ENCODE measurements at regions of chr16 and their contacts with region 1.

Region 1: DNA sequence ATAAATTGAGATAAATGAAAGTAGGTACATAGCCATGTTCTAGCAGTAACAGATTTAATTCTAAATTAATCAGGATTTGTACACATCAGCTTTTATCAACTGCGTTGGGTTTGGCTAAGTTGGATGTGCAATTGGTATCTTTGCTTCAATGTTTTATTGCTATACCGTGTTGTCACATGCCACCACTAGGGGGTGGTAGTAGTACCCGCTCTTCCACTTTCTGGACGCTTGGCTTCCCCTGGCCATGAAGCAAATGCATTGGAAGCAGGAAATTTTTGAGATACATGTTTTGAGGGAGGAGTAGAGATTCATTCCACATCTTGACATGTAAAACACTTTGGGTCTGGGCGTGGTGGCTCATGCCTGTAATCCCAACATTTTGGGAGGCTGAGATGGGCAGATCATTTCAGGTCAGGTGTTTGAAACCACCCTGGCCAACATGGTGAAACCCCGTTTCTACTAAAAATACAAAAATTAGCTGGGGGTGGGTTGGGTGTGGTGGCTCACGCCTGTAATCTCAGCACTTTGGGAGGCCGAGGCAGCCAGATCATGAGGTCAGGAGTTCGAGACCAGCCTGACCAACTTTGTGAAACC is 58.6 kb downstream of the EMP2 start:
- DNase-seq: peak; percentile 78

Region 2: DNA sequence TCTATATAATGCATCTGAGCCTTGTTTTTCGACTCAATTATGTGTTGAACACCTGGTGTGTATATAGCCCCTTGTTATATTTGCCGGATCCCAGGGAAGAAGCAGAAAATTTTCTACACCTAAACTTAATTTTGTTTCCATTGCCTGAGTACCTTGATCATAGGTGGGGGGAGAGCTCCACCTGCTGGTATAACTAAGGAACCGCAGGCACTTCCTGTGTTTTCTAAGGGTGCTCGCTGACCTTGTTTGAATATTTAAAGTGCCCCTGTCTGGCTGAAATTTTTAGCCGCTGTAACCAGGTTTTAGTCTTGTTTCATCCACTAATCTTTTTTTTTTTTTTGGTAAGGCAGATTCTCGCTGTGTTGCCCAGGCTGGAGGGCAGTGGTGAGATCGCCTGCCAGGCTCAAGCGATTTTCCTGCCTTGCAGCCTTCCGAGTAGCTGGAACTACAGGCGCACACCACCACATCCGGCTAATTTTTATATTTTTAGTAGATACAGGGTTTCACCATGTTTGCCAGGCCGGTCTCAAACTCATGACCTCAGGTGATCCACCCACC is 215.4 kb after region 1 on chr16:
- in situ Hi-C with region 1: loop called (anchors 10 kb)
- DNase-seq: peak; percentile 86